A549 (cell line): ENCODE measurements at regions of chr15 and their contacts with region 1.

Region 1: GRCh38 chr15:56491110-56491722 is 26.3 kb upstream of the MNS1 start:
- DNase-seq: peak; percentile 84 to 89
- ATAC-seq: peak; percentile 83 to 93
- H3K4me3 ChIP-seq: no peak overlapping the region
- H3K27ac ChIP-seq: no peak overlapping the region
- H3K4me1 ChIP-seq: 0 out of 3 replicates have a peak, but pooled peaks cover 3% of the 10 kb centered on the region
- CTCF ChIP-seq: peak; percentile 93
- EP300 ChIP-seq: no peak
- POLR2A ChIP-seq: no peak
- RAD21 ChIP-seq: peak; percentile 77 to 83

Region 2: GRCh38 chr15:56454836-56455235 is 36.4 kb before region 1 on chr15:
- CTCF ChIA-PET with region 1: no interaction called
- POLR2A ChIA-PET with region 1: no interaction called
- DNase-seq: no peak
- ATAC-seq: no peak
- H3K4me3 ChIP-seq: no peak overlapping the region
- H3K27ac ChIP-seq: no peak overlapping the region
- H3K4me1 ChIP-seq: no peaks in the 10 kb centered on the region
- CTCF ChIP-seq: no peak
- EP300 ChIP-seq: no peak
- POLR2A ChIP-seq: no peak
- RAD21 ChIP-seq: no peak

Region 3: DNA sequence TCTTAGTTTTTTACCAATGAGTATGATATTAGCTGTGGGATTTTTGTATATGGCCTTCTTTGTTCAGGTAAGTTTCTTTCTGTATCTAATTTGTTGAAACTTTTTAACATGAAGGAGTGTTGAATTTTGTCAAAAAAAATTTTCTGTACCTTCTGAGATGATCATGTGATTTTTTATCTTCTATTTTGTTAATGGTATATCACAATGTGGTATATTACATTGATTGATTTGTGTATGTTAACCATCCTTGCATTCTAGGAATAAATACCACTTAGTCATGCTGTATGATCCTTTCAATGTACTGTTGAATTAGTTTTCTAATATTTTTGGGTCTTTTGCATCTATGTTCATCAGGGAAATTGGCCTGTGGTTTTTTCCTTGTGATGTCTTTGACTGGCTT is 66.2 kb after region 1 on chr15:
- CTCF ChIA-PET with region 1: no interaction called
- POLR2A ChIA-PET with region 1: no interaction called
- DNase-seq: no peak
- ATAC-seq: no peak
- H3K4me3 ChIP-seq: no peak overlapping the region
- H3K27ac ChIP-seq: no peak overlapping the region
- H3K4me1 ChIP-seq: no peaks in the 10 kb centered on the region
- CTCF ChIP-seq: no peak
- EP300 ChIP-seq: no peak
- POLR2A ChIP-seq: no peak
- RAD21 ChIP-seq: no peak

Region 4: DNA sequence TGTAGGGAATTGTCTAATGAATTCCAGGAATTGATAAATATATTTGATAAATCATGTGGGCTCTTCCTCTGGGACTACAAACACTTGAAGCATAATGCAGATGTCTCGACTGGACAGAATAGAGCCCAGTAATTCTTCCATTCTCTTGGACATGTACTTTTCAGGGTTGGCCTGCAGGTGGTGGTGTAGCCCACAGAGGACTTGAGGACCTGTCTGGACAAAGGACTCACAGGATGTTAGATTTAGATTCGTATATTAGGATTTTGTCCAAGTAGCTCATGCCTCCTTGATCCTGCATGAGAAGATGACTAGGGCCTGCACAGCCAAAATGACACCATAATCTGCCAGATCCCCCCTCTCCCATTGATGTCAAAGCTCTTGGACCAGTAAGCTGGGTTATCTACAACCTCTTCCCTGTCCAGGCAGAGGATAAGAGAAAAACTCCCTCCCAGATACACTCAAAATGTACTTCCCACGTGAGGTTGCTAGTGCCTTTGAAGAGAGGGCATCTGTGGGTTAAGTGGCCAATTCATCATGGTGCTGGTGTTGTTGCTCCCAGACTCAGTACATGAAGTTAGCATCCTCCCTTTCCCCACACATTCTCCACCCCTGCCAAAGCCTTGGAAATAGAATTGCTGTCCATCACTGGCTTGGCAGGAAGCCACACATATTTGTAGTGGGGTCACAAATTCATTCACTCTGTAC is 330.7 kb after region 1 on chr15:
- CTCF ChIA-PET with region 1: interaction called, 14 read pairs
- POLR2A ChIA-PET with region 1: no interaction called
- DNase-seq: peak; percentile 58 to 80
- ATAC-seq: peak; percentile 88 to 97
- H3K4me3 ChIP-seq: no peak overlapping the region
- H3K27ac ChIP-seq: peak overlapping the region in 1 of 2 experiments; percentile 52; a peak in 2 of 6 replicates
- H3K4me1 ChIP-seq: peaks cover 7% of the 10 kb centered on the region
- CTCF ChIP-seq: peak; percentile 78
- EP300 ChIP-seq: no peak
- POLR2A ChIP-seq: no peak
- RAD21 ChIP-seq: peak; percentile 84 to 96

Region 5: GRCh38 chr15:56869573-56869972 is 378.4 kb after region 1 on chr15:
- CTCF ChIA-PET with region 1: interaction called, 13 read pairs
- POLR2A ChIA-PET with region 1: no interaction called
- DNase-seq: peak in 1 of 2 experiments; percentile 61
- ATAC-seq: peak; percentile 28 to 52; a peak in 2 of 6 replicates
- H3K4me3 ChIP-seq: no peak overlapping the region
- H3K27ac ChIP-seq: no peak overlapping the region
- H3K4me1 ChIP-seq: peaks cover 15% of the 10 kb centered on the region
- CTCF ChIP-seq: peak; percentile 72
- EP300 ChIP-seq: no peak
- POLR2A ChIP-seq: no peak
- RAD21 ChIP-seq: peak; percentile 73 to 77